Gastrocnemius medialis (tissue), 4 donors: ENCODE measurements at regions of chr9 and their contacts with region 1.

Region 1: GRCh38 chr9:99140685-99141314 is 35.9 kb downstream of the TGFBR1 start:
- DNase-seq: peak; percentile 19 to 26
- ATAC-seq: peak; percentile 79 to 88
- H3K4me3 ChIP-seq: no peak overlapping the region
- H3K27ac ChIP-seq: no peak overlapping the region
- H3K4me1 ChIP-seq: peaks cover 23 to 37% of the 10 kb centered on the region in 2 donors
- H3K27me3 ChIP-seq: no peaks in the 10 kb centered on the region
- CTCF ChIP-seq: peak; percentile 81 to 96 (median 93)
- POLR2A ChIP-seq: no peak

Region 2: DNA sequence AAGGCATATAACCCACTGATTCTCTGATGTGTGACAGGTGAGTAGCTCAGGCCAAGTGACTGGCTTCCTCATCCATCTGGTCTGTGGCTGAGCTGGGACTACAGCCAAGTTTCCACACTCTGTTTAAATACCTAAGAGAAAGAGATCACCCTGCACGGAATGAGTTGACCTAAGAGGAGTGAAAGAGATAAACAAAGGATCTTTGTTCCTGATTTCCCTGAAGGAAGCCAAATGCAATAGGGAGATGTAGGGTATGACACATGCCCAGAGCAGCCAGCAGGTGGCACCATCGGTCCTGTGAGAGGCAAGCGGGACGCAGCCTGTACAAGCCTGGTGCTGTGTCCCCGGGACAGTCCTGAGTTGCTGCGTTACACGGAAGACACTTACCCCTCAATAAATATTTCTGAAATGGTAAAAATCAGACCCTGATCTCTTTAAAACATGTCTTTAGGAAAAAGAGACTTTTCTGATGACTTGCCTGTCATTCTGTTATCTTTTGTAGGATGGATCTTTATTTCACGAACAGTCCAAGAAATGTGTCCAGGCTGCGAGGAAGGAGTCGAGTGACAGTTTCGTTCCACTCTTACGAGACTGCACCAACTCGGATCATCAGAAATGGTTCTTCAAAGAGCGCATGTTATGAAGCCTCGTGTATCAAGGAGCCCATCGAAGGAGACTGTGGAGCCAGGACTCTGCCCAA is 292.2 kb before region 1 on chr9:
- in situ Hi-C with region 1: loop called in 3 of 4 experiments (anchors 5 to 10 kb)
- intact Hi-C with region 1: loop called (anchors 1 kb)
- DNase-seq: peak; percentile 78 to 82
- ATAC-seq: peak; percentile 97 to 99
- H3K4me3 ChIP-seq: peak overlapping the region; percentile 43 to 49 (median 46)
- H3K27ac ChIP-seq: peak overlapping the region in 2 of 4 donors; percentile 7 to 41
- H3K4me1 ChIP-seq: no peaks in the 10 kb centered on the region
- H3K27me3 ChIP-seq: no peaks in the 10 kb centered on the region
- CTCF ChIP-seq: peak; percentile 70 to 91 (median 76)
- POLR2A ChIP-seq: no peak

Region 3: DNA sequence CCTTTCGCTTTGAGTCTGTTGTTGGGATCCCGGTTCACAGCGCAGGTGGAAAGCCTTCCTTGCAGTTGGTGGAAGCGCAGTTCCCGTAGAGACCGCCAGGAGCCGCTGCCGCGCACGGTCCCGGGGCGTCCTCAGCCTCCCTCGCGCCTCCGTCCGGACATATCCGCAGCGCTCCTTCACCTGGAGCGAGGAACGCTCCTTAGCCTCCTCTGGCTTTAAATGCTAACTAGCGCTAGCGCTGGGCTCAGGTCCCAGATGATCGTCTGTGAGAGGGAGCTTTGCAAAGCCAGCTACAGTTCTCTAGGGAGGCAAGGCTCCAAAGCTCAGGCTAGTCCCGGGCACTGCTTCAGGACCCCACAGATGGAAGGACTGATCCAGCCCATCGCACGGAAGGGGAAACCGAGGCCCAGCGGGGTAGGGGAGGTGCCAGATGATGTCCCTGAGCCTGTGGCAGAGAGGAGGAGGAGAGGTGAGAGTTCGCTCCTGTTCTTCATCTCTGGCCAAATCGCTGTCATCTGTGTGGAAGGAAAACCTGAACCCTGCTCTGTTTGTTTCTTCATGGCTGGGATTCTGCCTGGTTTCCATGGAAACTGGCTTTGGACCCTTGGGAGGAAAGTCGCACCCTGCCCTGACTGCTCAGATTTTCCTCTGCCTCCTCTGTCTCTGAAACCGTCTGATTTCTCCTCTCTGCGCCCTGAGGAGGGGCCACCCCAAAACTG is 165.6 kb before region 1 on chr9:
- in situ Hi-C with region 1: loop called in 1 of 4 experiments (anchors 25 kb)
- intact Hi-C with region 1: loop called (anchors 1 kb)
- DNase-seq: peak; percentile 59 to 67
- ATAC-seq: peak; percentile 67 to 75
- H3K4me3 ChIP-seq: peak overlapping the region; percentile 15 to 50 (median 37)
- H3K27ac ChIP-seq: peak overlapping the region; percentile 39 to 74 (median 70)
- H3K4me1 ChIP-seq: peaks cover 22 to 30% of the 10 kb centered on the region in 2 donors
- H3K27me3 ChIP-seq: peaks cover 0 to 3% (median 0%) of the 10 kb centered on the region in 3 donors
- CTCF ChIP-seq: peak; percentile 88 to 98 (median 93)
- POLR2A ChIP-seq: no peak

Region 4: DNA sequence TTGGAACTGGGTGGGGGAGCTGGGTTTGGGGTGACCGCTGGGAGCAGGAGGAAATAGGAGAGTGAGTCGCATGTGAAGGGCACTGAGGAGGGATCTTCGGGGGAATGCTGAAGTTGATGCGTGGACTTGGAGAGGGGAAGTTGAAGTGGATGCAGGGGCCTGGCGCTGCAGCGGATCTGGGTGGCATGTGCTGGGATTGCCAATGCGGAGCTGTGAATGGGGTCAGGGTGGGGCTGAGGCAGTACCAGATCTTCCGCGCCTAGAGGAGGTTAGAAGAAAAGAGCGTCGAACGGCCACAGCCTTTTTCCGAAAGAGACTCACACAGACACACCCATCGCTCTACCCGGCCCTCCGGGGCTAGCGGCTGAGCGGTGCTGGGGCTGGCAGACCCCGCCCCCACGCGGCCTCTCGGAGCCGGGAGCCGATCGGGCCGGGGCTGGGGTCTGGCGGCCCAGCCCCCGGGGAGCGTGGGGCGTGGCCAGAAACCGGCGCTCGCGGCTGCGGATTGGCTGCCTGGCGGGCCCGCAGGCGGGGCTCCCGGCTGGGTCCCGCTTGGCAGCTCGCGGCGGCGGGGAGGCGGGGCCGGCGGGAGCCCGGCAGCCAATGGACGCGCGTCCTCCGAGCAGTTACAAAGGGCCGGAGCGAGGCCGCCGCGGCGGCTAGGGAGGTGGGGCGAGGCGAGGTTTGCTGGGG is 36.2 kb before region 1 on chr9 and contains the start of gene TGFBR1:
- in situ Hi-C with region 1: no loop called
- intact Hi-C with region 1: loop called (anchors 2 kb)
- DNase-seq: peak; percentile 87 to 91
- ATAC-seq: peak; percentile 86 to 89
- H3K4me3 ChIP-seq: peak within 1 kb of the TSS; percentile 73 to 97 (median 86)
- H3K27ac ChIP-seq: peak within 1 kb of the TSS; percentile 80 to 91 (median 88)
- H3K4me1 ChIP-seq: peaks cover 39 to 50% of the 10 kb centered on the region in 2 donors
- H3K27me3 ChIP-seq: no peaks in the 10 kb centered on the region
- CTCF ChIP-seq: no peak
- POLR2A ChIP-seq: peak; percentile 94 to 98
- total RNA-seq, gene TGFBR1: 13.5 to 19.0 (median 14.3) TPM